Common myeloid progenitor, CD34-positive (primary cell): ENCODE measurements at regions of chr7 and their contacts with region 1.

Region 1: DNA sequence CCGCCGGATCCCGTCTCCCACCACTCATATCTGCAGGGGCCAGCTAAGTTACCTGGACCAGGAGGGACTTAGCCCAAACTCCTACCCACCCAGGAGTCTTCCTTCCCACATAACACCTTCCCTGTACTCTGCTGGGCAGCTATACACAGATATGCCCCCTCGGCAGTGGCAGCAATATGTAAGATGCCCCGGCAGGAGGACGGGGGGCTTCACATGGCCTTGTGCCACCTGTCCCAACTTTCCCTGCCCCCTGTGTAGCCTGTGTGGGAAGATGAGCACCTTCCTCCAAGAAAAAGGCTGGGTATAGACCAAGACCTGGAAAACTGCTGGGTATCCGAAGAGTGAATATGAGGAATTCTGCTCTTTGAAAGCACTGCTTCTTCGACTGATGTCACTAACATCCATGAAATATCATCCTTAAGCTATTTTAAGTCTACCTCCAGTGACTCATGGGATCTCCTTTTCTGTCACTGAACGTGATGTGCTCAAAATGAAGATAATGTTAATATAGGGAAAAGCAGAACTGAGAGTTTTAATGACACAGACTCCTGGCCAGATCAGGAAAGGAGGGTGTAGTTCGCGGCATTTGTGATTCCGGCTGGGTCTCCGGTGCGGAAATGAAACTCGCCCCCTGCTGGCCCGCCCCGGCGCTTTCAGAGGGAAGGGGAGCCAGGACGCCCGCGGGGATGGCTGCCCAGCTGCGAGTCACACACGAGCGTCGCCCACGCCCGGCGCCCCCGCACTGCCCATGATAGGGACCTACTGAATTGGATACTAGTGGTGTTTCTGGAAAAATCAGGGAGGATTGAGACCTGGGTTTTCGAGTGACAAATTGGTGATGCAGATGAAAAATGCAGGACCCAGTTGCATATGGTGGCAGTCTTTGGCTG is 256.9 kb upstream of the NFE2L3 start:
- DNase-seq: peak; percentile 87 to 91 (median 89)
- H3K4me3 ChIP-seq: peak overlapping the region in 4 of 7 experiments; percentile 1 to 60 (median 36)
- H3K27ac ChIP-seq: no peak overlapping the region
- H3K4me1 ChIP-seq: peaks cover 8 to 41% (median 30%) of the 10 kb centered on the region in 4 experiments
- H3K27me3 ChIP-seq: peaks cover 0 to 36% (median 12%) of the 10 kb centered on the region in 5 experiments

Region 2: GRCh38 chr7:25636871-25637283 is 258.3 kb before region 1 on chr7:
- CTCF ChIA-PET with region 1: no interaction called
- POLR2A ChIA-PET with region 1: no interaction called
- DNase-seq: no peak
- H3K4me3 ChIP-seq: no peak overlapping the region
- H3K27ac ChIP-seq: no peak overlapping the region
- H3K4me1 ChIP-seq: peaks cover 2 to 11% (median 8%) of the 10 kb centered on the region in 4 experiments
- H3K27me3 ChIP-seq: no peaks in the 10 kb centered on the region

Region 3: DNA sequence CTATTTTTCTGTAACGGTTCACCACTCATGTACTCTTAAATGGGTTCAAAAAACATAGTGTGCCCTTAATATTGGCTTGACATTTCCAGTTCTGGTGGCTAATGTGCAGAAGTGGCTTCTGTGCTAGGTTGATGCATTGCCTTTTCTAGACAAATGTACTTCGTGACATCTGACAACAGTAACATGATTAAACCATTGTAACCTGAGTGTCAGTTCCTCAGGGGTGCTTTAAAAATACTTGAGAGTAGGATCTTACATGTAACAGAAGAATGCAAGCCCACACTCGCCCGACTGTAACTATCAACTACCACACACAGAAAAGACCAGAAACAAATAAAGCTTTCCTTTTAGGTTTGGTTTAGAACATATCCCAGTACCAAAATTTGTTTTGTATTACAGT is 136.6 kb before region 1 on chr7:
- CTCF ChIA-PET with region 1: no interaction called
- POLR2A ChIA-PET with region 1: no interaction called
- DNase-seq: no peak
- H3K4me3 ChIP-seq: no peak overlapping the region
- H3K27ac ChIP-seq: no peak overlapping the region
- H3K4me1 ChIP-seq: no peaks in the 10 kb centered on the region
- H3K27me3 ChIP-seq: peaks cover 0 to 2% (median 0%) of the 10 kb centered on the region in 5 experiments

Region 4: DNA sequence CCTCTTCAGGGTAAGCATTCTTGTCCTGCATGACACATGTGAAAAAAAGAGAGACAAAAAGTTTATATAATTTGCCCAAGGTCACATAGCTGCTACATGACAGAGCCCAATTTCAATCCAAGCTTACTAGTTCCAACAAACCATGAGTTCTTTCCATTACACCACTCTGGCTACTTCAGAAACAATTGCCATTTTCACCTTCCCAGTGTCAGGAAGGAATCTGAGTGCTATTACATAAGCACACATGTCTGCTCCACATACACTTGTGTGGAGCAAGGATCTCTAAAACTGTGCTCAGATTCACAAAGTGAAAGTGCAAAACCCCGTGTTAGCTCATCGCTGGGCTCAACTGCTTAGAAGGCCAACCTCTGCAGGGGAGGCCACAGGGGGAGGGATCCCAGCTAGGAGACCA is 99.3 kb before region 1 on chr7:
- CTCF ChIA-PET with region 1: no interaction called
- POLR2A ChIA-PET with region 1: no interaction called
- DNase-seq: no peak
- H3K4me3 ChIP-seq: no peak overlapping the region
- H3K27ac ChIP-seq: no peak overlapping the region
- H3K4me1 ChIP-seq: no peaks in the 10 kb centered on the region
- H3K27me3 ChIP-seq: no peaks in the 10 kb centered on the region

Region 5: GRCh38 chr7:25908154-25908949 is 13.2 kb after region 1 on chr7:
- CTCF ChIA-PET with region 1: interaction called, 31 read pairs
- POLR2A ChIA-PET with region 1: no interaction called
- DNase-seq: no peak
- H3K4me3 ChIP-seq: no peak overlapping the region
- H3K27ac ChIP-seq: no peak overlapping the region
- H3K4me1 ChIP-seq: no peaks in the 10 kb centered on the region
- H3K27me3 ChIP-seq: peaks cover 0 to 5% (median 3%) of the 10 kb centered on the region in 5 experiments

Region 6: DNA sequence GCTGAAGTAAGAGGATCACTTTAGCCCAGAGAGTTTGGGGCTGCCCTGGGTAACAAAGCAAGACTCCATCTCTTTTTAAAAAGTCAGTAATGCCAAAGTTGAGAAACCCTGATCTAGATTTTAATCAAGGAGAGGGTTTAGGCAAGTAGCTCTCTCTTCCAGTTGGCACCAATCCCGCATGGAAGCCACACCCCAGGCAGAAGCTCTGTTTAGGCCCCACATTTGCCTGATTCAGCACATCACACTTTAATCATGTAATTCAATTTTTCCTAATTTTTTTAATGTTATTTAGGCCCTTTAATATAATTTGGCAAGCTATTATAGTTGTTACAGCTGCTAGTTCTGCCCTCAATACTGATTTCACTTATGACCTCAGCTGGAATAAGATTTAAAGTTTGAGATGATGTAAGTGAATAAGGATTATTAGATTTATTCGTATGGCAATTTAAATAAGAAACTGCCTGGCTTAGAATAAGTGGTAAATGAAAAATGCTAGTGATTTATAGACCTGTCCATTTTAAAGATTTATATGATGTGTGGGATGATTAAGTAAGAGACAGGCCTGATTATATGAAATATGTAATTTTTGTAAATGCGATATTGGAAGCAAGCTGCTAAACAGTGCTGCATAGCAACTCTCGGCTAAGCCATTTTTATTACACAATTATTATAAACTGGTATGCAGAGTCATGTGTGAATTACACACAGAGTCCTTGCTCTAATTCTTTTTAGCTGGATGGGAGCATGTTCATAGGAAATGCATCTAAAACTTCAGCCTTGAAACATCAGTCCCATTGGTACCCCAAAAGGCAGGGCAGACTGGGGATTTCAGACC is 176.7 kb after region 1 on chr7:
- CTCF ChIA-PET with region 1: interaction called, 16 read pairs
- POLR2A ChIA-PET with region 1: no interaction called
- DNase-seq: no peak
- H3K4me3 ChIP-seq: no peak overlapping the region
- H3K27ac ChIP-seq: no peak overlapping the region
- H3K4me1 ChIP-seq: no peaks in the 10 kb centered on the region
- H3K27me3 ChIP-seq: peaks cover 0 to 3% (median 0%) of the 10 kb centered on the region in 5 experiments

Region 7: GRCh38 chr7:26187380-26188205 is 292.4 kb after region 1 on chr7:
- CTCF ChIA-PET with region 1: interaction called, 19 read pairs
- POLR2A ChIA-PET with region 1: no interaction called
- DNase-seq: peak in 2 of 3 donors; percentile 53 to 60
- H3K4me3 ChIP-seq: no peak overlapping the region
- H3K27ac ChIP-seq: peak overlapping the region in 1 of 2 experiments; percentile 14
- H3K4me1 ChIP-seq: peaks cover 2 to 8% (median 2%) of the 10 kb centered on the region in 4 experiments
- H3K27me3 ChIP-seq: no peaks in the 10 kb centered on the region

Region 8: GRCh38 chr7:26200444-26201246 is 305.5 kb after region 1 on chr7 and contains the start of gene HNRNPA2B1:
- CTCF ChIA-PET with region 1: interaction called, 36 read pairs
- POLR2A ChIA-PET with region 1: interaction called, 3 read pairs
- DNase-seq: peak; percentile 99 to 100 (median 100)
- H3K4me3 ChIP-seq: peak within 1 kb of the TSS; percentile 95 to 100 (median 99)
- H3K27ac ChIP-seq: peak within 1 kb of the TSS; percentile 98 to 99
- H3K4me1 ChIP-seq: peaks cover 36 to 55% (median 50%) of the 10 kb centered on the region in 4 experiments
- H3K27me3 ChIP-seq: no peaks in the 10 kb centered on the region

Region 9: GRCh38 chr7:26667500-26668133 is 772.5 kb after region 1 on chr7:
- CTCF ChIA-PET with region 1: interaction called, 17 read pairs
- POLR2A ChIA-PET with region 1: no interaction called
- DNase-seq: peak; percentile 98
- H3K4me3 ChIP-seq: peak overlapping the region in 4 of 7 experiments; percentile 2 to 67 (median 12)
- H3K27ac ChIP-seq: peak overlapping the region; percentile 77 to 83
- H3K4me1 ChIP-seq: peaks cover 11 to 64% (median 42%) of the 10 kb centered on the region in 4 experiments
- H3K27me3 ChIP-seq: no peaks in the 10 kb centered on the region